Activated naive CD4-positive, alpha-beta T cell treated with anti-CD3 and anti-CD28 coated beads for 36 hours (primary cell): ENCODE measurements at regions of chr19 and their contacts with region 1.

Region 1: DNA sequence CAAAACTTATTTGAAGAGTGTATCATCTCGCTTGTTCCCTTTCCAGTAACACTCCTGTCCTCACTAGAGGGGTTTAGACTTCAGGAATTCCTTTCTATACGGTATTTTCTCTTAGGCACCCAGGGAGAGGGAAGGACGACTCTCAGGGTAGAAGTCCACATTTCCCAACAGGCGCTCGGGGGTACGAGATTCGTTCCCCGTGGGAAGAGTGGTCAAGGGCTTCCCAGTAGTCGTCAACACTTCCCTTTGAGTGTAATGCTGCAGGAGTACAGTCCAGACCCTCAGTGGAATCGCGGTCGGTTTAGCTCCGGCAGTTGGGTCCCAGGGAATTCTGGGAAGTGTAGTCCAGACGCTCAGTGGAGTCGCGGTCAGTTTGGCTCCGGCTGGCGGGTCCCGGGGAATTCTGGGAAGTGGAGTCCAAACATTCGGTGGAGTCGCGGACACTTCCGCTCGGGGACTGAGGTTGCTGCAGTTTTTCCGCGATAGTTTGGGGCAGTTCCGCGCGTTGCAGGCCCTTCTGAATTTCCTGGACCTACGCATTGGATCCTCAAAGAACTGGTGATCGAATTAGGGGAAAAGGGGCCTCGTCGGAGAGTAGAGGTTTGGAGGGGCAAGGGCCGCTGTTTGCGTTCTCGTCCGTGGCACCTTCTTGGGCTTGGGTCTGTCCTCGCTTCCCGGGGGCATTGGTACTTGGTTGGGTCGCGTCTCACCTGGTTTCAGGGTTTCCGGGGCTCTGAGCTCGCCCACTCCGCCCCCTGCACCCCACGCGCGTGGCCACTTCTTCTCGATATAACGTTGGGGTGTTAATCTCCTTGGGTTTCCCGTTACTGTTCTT is at the start of gene ZNF224:
- DNase-seq: peak; percentile 91
- H3K4me3 Mint-ChIP-seq: peak within 1 kb of the TSS; percentile 98
- H3K27ac Mint-ChIP-seq: peak within 1 kb of the TSS; percentile 87
- H3K4me1 Mint-ChIP-seq: peaks cover 13% of the 10 kb centered on the region
- H3K27me3 Mint-ChIP-seq: no peaks in the 10 kb centered on the region
- total RNA-seq, gene ZNF224: 8.7 to 10.9 TPM

Region 2: DNA sequence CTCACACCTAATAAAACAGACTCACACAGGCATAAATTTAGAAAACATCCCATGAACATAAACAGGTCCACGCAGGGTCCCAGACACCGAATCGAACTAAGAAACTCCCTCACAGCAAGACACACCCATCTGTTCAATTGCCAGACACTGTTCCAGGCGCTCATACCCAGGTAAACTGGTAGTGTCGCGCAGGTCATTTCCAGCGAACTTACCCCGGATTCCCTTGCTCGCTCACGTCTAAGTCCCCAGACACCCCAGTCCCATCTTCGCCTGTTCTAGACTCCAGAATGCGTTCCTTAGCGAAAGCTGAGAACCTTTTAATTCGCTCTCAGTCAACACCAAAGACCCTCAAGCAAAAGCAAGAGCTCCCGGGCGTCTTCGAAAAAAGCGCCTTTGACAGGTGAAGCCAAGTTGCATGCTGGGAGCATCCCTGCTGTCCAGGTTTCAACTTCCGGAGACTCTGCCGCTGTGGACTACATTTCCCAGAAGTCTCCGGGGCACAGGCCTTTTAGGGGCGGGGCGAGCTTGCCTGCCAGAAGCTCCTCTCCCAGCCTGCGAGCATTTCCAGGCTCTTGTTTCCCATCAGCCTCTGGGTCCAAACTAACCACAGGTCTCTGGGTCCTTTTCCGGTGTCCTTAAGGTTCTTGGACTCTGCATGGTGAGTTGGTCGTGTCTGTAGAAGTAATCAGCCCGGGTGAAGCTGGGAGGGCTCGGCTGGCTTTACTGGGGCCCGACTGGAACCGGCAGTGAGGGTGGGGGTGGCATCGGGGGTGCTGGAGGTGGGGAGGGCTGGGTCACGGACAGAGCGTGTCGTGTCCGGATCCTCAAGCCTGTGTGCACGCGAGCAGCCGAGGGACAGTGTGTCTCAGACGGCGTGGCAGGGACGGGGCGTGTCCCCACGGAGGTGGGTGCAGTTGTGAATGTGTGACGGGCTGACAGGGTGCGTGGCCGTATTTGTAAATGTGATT is 267.1 kb before region 1 on chr19 and contains the start of gene ZNF283:
- CTCF ChIA-PET with region 1: no interaction called
- intact Hi-C with region 1: loop called (anchors 1 kb)
- DNase-seq: peak; percentile 92
- H3K4me3 Mint-ChIP-seq: peak within 1 kb of the TSS; percentile 88
- H3K27ac Mint-ChIP-seq: peak within 1 kb of the TSS; percentile 75
- H3K4me1 Mint-ChIP-seq: peaks cover 17% of the 10 kb centered on the region
- H3K27me3 Mint-ChIP-seq: no peaks in the 10 kb centered on the region
- total RNA-seq, gene ZNF283: 6.8 to 7.7 TPM

Region 3: GRCh38 chr19:43983912-43984686 is 110.0 kb before region 1 on chr19 and contains the start of gene ZNF155:
- CTCF ChIA-PET with region 1: no interaction called
- intact Hi-C with region 1: loop called (anchors 1 kb)
- DNase-seq: peak; percentile 83
- H3K4me3 Mint-ChIP-seq: peak within 1 kb of the TSS; percentile 98
- H3K27ac Mint-ChIP-seq: peak within 1 kb of the TSS; percentile 91
- H3K4me1 Mint-ChIP-seq: peaks cover 8% of the 10 kb centered on the region
- H3K27me3 Mint-ChIP-seq: no peaks in the 10 kb centered on the region
- total RNA-seq, gene ZNF155: 2.9 to 3.1 TPM